IMR-90 (cell line): ENCODE measurements at regions of chr2 and their contacts with region 1.

Region 1: DNA sequence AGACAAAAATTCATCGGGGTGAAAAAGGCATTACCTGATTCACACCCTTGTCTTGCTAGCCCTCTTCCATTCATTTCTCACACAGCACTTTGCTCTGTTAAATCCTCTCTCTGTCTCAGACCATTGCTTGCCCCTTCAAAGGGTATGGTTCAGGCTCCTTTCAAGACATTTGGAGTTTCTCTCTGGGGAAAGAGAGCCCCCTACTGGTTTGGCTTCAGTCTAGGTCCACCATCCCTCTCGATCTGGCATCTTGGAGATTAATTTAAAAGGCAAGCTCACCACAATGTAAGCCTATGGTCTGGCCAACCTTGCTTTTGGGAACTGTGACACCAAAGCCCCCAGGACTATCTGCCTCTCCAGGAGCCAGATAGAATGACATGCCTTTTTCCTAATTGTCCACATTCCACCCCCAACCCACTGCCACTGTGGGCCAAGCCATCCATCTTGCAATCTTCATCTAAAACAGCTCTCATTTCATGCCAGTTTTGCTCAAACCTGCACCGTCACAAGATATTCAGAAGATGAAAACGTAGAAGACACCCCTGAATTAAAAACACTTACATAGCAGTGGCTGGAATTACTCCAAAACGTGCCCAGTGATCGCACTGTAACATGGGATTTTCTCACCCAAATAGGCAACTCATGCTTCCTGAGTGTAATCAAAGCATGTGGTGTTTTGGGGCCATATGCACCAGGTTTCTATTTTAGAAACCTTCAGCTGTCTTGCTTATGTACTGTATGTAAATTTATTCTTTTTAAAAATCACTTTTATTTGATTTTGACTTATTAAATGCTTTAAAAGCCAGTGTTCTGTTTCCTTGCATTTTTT is 93.9 kb downstream of the FARSB start:
- DNase-seq: peak; percentile 22
- ATAC-seq: peak; percentile 67
- H3K4me3 ChIP-seq: no peak overlapping the region
- H3K27ac ChIP-seq: no peak overlapping the region
- H3K4me1 ChIP-seq: no peaks in the 10 kb centered on the region
- H3K27me3 ChIP-seq: no peaks in the 10 kb centered on the region
- CTCF ChIP-seq: peak; percentile 47
- POLR2A ChIP-seq: no peak
- RAD21 ChIP-seq: peak; percentile 50

Region 2: DNA sequence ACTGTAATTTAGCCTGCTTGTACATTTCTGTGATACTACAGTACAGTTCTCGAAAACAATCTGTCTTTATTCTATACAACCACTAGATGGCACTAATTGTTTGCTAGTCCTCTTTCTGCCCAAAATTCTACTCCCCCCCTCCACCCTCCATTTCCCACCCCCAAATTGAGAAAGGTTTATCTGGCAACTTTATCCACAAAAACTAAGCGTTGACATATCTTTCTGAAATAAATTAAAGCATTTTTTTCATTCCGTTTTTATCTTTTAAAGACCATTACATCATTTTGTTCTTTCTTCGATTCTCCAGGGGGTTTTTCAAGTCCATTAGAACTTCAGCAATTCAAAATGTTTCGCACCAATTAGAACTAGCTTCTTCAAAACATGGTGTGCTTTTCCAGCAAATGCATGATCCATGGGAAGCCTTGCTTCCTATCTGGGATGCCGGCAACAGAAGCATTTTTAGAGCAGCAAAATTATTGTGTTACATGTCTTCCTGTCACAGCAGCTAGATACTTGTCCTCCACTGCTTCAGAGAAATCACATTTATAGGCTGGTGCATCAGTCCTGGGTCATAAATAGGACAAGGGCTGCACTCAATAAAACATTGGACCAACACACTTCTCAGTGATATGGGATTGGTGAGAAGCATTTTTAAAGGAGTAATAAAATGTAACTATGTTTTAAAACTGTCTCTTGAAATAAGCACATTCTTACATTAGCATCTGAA is 504.5 kb before region 1 on chr2:
- CTCF ChIA-PET with region 1: interaction called, 3 read pairs
- POLR2A ChIA-PET with region 1: no interaction called
- dilution Hi-C with region 1: no loop called
- in situ Hi-C with region 1: no loop called
- intact Hi-C with region 1: loop called (anchors 1 kb)
- DNase-seq: no peak
- ATAC-seq: peak; percentile 54
- H3K4me3 ChIP-seq: no peak overlapping the region
- H3K27ac ChIP-seq: no peak overlapping the region
- H3K4me1 ChIP-seq: no peaks in the 10 kb centered on the region
- H3K27me3 ChIP-seq: peaks cover 9% of the 10 kb centered on the region
- CTCF ChIP-seq: peak; percentile 55
- POLR2A ChIP-seq: no peak
- RAD21 ChIP-seq: peak; percentile 55

Region 3: GRCh38 chr2:222318026-222318711 is 243.9 kb before region 1 on chr2:
- CTCF ChIA-PET with region 1: interaction called, 4 read pairs
- POLR2A ChIA-PET with region 1: no interaction called
- dilution Hi-C with region 1: no loop called
- in situ Hi-C with region 1: no loop called
- intact Hi-C with region 1: loop called (anchors 1 kb)
- DNase-seq: peak; percentile 52
- ATAC-seq: peak; percentile 56
- H3K4me3 ChIP-seq: peak overlapping the region; percentile 17
- H3K27ac ChIP-seq: no peak overlapping the region
- H3K4me1 ChIP-seq: no peaks in the 10 kb centered on the region; the same call in 1 of the 2 replicates
- H3K27me3 ChIP-seq: peaks cover 49% of the 10 kb centered on the region
- CTCF ChIP-seq: peak; percentile 49
- POLR2A ChIP-seq: no peak
- RAD21 ChIP-seq: peak; percentile 49

Region 4: GRCh38 chr2:222332116-222332515 is 229.9 kb before region 1 on chr2:
- CTCF ChIA-PET with region 1: interaction called, 13 read pairs
- POLR2A ChIA-PET with region 1: no interaction called
- dilution Hi-C with region 1: no loop called
- in situ Hi-C with region 1: no loop called
- intact Hi-C with region 1: no loop called
- DNase-seq: no peak
- ATAC-seq: no peak
- H3K4me3 ChIP-seq: no peak overlapping the region
- H3K27ac ChIP-seq: no peak overlapping the region
- H3K4me1 ChIP-seq: no peaks in the 10 kb centered on the region
- H3K27me3 ChIP-seq: no peaks in the 10 kb centered on the region
- CTCF ChIP-seq: no peak
- POLR2A ChIP-seq: no peak
- RAD21 ChIP-seq: no peak

Region 5: GRCh38 chr2:222518570-222519381 is 43.3 kb before region 1 on chr2:
- CTCF ChIA-PET with region 1: no interaction called
- POLR2A ChIA-PET with region 1: no interaction called
- dilution Hi-C with region 1: no loop called
- in situ Hi-C with region 1: no loop called
- intact Hi-C with region 1: no loop called
- DNase-seq: no peak
- ATAC-seq: peak; percentile 11; the same call in 1 of the 2 replicates
- H3K4me3 ChIP-seq: no peak overlapping the region
- H3K27ac ChIP-seq: no peak overlapping the region
- H3K4me1 ChIP-seq: no peaks in the 10 kb centered on the region
- H3K27me3 ChIP-seq: no peaks in the 10 kb centered on the region
- CTCF ChIP-seq: no peak
- POLR2A ChIP-seq: no peak
- RAD21 ChIP-seq: no peak